Activated CD8-positive, alpha-beta T cell treated with anti-CD3 and anti-CD28 coated beads, Interleukin-2, amount 10 ng/mL, durations not matched to agents 7 days and 5 days (primary cell): ENCODE measurements at regions of chr1 and their contacts with region 1.

Region 1: GRCh38 chr1:2300851-2301606 is 72.9 kb downstream of the SKI start:
- DNase-seq: peak; percentile 94
- ATAC-seq: peak; percentile 72
- H3K4me3 Mint-ChIP-seq: peak overlapping the region; percentile 73
- H3K27ac Mint-ChIP-seq: peak overlapping the region; percentile 99
- H3K4me1 Mint-ChIP-seq: peaks cover 59% of the 10 kb centered on the region
- H3K27me3 Mint-ChIP-seq: no peaks in the 10 kb centered on the region

Region 2: GRCh38 chr1:2014741-2015735 is 286.0 kb before region 1 on chr1:
- CTCF ChIA-PET with region 1: no interaction called
- POLR2A ChIA-PET with region 1: no interaction called
- DNase-seq: no peak
- ATAC-seq: no peak
- H3K4me3 Mint-ChIP-seq: no peak overlapping the region
- H3K27ac Mint-ChIP-seq: no peak overlapping the region
- H3K4me1 Mint-ChIP-seq: peaks cover 3% of the 10 kb centered on the region
- H3K27me3 Mint-ChIP-seq: peaks cover 30% of the 10 kb centered on the region

Region 3: DNA sequence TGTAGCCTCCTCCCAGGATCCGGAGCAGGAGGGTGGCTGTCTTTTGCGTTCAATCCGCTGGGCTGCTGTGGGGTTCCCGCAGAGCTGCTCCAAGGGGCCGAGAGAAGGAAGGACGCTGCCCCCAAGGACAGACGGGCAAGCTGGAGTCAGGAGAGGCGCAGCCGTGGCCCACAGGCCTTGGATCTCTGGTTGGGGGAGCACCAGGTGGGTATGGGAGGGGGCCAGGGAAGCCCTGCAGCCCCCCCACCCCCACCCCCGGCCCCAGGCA is 88.8 kb before region 1 on chr1:
- CTCF ChIA-PET with region 1: no interaction called
- POLR2A ChIA-PET with region 1: no interaction called
- DNase-seq: no peak
- ATAC-seq: no peak
- H3K4me3 Mint-ChIP-seq: no peak overlapping the region
- H3K27ac Mint-ChIP-seq: no peak overlapping the region
- H3K4me1 Mint-ChIP-seq: peaks cover 17% of the 10 kb centered on the region
- H3K27me3 Mint-ChIP-seq: no peaks in the 10 kb centered on the region

Region 4: DNA sequence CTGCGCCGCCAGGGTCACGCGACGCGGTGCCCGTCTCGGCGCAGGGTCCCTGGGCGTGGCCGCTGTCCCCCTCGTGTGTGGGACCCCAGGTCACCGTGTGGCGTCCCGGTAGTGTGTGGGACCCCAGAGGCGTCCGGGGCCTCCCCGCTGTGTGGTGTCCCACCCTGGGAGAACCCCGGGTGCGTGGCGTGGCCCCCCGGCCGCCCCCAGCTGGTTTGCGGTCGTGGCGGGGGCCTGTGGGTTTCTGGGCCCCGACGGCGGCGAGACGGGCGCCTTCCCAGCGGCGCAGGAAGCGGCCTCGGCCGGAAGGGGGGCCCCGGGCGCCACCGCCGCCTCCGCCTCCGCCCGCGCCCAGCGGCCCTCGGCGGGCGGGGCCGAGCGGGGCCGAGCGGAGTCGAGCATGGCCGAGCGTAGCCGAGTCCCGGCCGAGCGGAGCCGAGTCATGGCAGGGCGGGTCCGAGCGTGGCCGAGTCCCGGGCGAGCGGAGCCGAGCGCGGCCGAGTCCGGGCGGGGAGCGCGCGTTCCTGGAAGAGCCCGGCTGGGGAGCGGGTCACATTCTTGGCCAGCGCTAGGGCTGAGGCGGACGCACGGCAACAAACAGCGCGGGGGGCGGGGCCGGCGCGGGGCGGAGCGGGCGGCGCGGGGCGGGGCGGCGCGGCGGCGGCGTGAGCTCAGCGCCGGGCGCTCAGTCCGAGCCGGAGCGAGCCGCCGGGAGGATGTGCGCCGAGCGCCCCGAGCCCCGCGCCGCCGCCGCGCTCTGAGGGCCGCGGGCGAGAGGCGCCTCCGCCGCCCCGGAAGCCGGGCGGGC is 73.5 kb before region 1 on chr1:
- CTCF ChIA-PET with region 1: no interaction called
- POLR2A ChIA-PET with region 1: interaction called, 23 read pairs
- DNase-seq: peak; percentile 95
- ATAC-seq: peak; percentile 81
- H3K4me3 Mint-ChIP-seq: peak overlapping the region; percentile 49
- H3K27ac Mint-ChIP-seq: peak overlapping the region; percentile 69
- H3K4me1 Mint-ChIP-seq: peaks cover 30% of the 10 kb centered on the region
- H3K27me3 Mint-ChIP-seq: peaks cover 8% of the 10 kb centered on the region

Region 5: GRCh38 chr1:2255420-2256369 is 45.3 kb before region 1 on chr1:
- CTCF ChIA-PET with region 1: no interaction called
- POLR2A ChIA-PET with region 1: interaction called, 17 read pairs
- DNase-seq: peak; percentile 88
- ATAC-seq: peak; percentile 68
- H3K4me3 Mint-ChIP-seq: no peak overlapping the region
- H3K27ac Mint-ChIP-seq: no peak overlapping the region
- H3K4me1 Mint-ChIP-seq: peaks cover 30% of the 10 kb centered on the region
- H3K27me3 Mint-ChIP-seq: no peaks in the 10 kb centered on the region

Region 6: GRCh38 chr1:2290595-2291510 is 10.2 kb before region 1 on chr1:
- CTCF ChIA-PET with region 1: interaction called, 19 read pairs
- POLR2A ChIA-PET with region 1: interaction called, 45 read pairs
- DNase-seq: peak; percentile 92
- ATAC-seq: peak; percentile 83
- H3K4me3 Mint-ChIP-seq: peak overlapping the region; percentile 78
- H3K27ac Mint-ChIP-seq: peak overlapping the region; percentile 98
- H3K4me1 Mint-ChIP-seq: peaks cover 78% of the 10 kb centered on the region
- H3K27me3 Mint-ChIP-seq: no peaks in the 10 kb centered on the region

Region 7: GRCh38 chr1:2314803-2315673 is 14.0 kb after region 1 on chr1:
- CTCF ChIA-PET with region 1: interaction called, 13 read pairs
- POLR2A ChIA-PET with region 1: interaction called, 5 read pairs
- DNase-seq: peak; percentile 63
- ATAC-seq: peak; percentile 37
- H3K4me3 Mint-ChIP-seq: peak overlapping the region; percentile 53
- H3K27ac Mint-ChIP-seq: peak overlapping the region; percentile 52
- H3K4me1 Mint-ChIP-seq: peaks cover 27% of the 10 kb centered on the region
- H3K27me3 Mint-ChIP-seq: no peaks in the 10 kb centered on the region